ENCODE measurements at regions of chr11 and their contacts with region 1.

Region 1: DNA sequence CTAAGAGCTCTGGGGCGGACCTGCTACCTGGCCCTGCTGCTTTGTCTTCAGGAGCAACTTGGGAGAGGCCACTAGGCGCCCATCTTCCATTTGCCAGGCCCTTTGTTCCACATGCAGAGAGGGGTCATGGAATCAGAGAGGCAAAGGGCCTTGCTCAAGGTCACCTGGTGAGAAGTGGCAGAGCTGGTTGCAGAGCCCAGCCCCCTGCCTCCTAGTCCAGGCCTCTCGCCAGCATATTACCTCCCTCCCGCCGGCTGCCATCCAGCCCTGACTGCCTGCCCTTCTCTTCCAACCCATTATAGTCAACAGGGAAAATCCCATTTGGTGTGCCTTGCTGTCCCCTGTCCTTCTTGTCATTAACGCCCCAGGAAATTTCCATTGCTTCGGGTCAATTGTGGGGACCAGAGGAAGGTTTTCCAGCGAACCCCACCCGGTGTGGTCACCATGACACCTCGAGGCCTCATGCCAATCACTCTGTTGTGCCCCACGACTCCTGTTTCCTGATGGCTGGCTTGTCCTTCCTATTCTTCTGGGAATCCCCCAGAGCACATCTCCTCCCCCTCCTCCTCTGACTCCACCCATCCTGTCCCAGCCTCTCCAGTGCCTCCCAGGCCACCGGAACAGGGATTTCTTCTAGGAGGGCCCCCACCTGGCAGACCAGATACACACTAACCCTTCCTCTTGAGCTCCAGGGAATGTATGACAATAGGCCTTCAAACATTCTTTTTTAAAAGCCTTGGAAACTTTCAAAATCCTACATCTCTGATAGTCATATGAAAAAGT is 77.0 kb downstream of the NECTIN1 start:
- DNase-seq: no peak
- ATAC-seq: peak in 4 of 8 donors; percentile 44 to 72 (median 48)
- H3K4me3 ChIP-seq: no peak overlapping the region
- H3K27ac ChIP-seq: no peak overlapping the region
- H3K4me1 ChIP-seq: peaks cover 0 to 9% (median 0%) of the 10 kb centered on the region in 9 donors
- H3K27me3 ChIP-seq: no peaks in the 10 kb centered on the region
- CTCF ChIP-seq: no peak

Region 2: GRCh38 chr11:119891055-119891768 is 239.2 kb after region 1 on chr11:
- intact Hi-C with region 1: no loop called
- DNase-seq: peak; percentile 73 to 79
- ATAC-seq: peak; percentile 85 to 95 (median 92)
- H3K4me3 ChIP-seq: no peak overlapping the region
- H3K27ac ChIP-seq: peak overlapping the region in 9 of 10 donors; percentile 55 to 94 (median 78)
- H3K4me1 ChIP-seq: peaks cover 0 to 34% (median 14%) of the 10 kb centered on the region in 9 donors
- H3K27me3 ChIP-seq: peaks cover 0 to 18% (median 6%) of the 10 kb centered on the region in 7 donors
- CTCF ChIP-seq: no peak

Region 3: GRCh38 chr11:120013325-120014270 is 361.6 kb after region 1 on chr11:
- intact Hi-C with region 1: loop called in 1 of 10 experiments (anchors 10 kb)
- DNase-seq: peak; percentile 42 to 53
- ATAC-seq: peak; percentile 76 to 89 (median 83)
- H3K4me3 ChIP-seq: no peak overlapping the region
- H3K27ac ChIP-seq: no peak overlapping the region
- H3K4me1 ChIP-seq: peaks cover 0 to 6% (median 0%) of the 10 kb centered on the region in 9 donors
- H3K27me3 ChIP-seq: peaks cover 0 to 83% (median 59%) of the 10 kb centered on the region in 7 donors
- CTCF ChIP-seq: peak; percentile 33 to 76 (median 72)